ENCODE measurements at regions of chr1 and their contacts with region 1.

Region 1: DNA sequence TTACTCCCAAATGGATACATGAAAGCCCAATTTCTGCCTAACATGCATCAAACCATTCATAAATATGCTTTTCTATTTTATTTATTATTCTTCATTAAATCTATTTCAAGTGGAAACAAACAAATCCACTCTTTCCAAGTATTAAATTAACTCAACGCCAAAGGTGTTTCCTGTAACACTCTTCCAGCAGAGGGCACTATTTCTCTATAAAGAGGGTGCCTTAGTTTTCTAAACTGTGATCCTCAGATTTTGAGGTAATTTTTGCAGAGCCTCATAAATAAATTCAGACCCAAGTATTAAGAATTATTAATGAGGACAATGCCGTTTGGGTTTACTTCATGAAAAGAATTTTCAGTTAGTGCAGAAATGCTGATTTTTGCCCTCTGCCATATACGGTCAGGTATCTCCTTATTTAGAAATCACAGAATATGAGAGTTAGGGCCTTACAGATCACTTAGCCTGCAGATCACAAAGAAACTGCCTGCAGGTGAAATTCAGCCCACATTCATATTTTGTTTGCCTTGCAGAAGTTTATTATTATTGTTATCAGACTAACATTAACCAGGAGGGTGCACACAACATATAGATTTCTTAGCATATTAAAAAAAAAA is 40.1 kb upstream of the MYSM1 start:
- DNase-seq: peak; percentile 52 to 79 (median 72)
- H3K4me3 ChIP-seq: no peak overlapping the region
- H3K27ac ChIP-seq: no peak overlapping the region
- H3K4me1 ChIP-seq: peaks cover 4 to 21% (median 12%) of the 10 kb centered on the region in 4 experiments
- H3K27me3 ChIP-seq: no peaks in the 10 kb centered on the region

Region 2: DNA sequence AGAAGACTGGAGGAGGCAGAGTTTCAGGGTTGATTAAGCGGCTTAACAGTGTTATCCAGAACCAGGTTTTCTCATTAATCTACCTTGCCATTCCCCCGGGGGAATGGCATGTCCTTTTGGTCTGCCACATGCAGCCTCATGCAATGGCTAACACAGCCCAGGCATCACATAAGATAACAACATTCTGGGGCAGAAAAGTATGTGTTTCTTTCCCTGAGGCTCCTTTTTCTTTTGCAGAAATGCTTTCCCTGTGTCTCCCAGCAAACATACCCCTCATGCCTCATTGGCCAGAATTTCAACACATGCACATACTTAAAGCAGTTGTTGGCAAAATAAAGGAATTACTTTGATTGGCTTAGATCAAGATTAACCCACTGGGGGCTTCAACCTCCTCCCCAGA is 292.1 kb before region 1 on chr1:
- CTCF ChIA-PET with region 1: no interaction called
- POLR2A ChIA-PET with region 1: no interaction called
- DNase-seq: no peak
- H3K4me3 ChIP-seq: no peak overlapping the region
- H3K27ac ChIP-seq: no peak overlapping the region
- H3K4me1 ChIP-seq: no peaks in the 10 kb centered on the region
- H3K27me3 ChIP-seq: no peaks in the 10 kb centered on the region

Region 3: GRCh38 chr1:58688931-58689566 is 50.9 kb before region 1 on chr1:
- CTCF ChIA-PET with region 1: no interaction called
- POLR2A ChIA-PET with region 1: no interaction called
- DNase-seq: no peak
- H3K4me3 ChIP-seq: no peak overlapping the region
- H3K27ac ChIP-seq: no peak overlapping the region
- H3K4me1 ChIP-seq: no peaks in the 10 kb centered on the region
- H3K27me3 ChIP-seq: no peaks in the 10 kb centered on the region

Region 4: DNA sequence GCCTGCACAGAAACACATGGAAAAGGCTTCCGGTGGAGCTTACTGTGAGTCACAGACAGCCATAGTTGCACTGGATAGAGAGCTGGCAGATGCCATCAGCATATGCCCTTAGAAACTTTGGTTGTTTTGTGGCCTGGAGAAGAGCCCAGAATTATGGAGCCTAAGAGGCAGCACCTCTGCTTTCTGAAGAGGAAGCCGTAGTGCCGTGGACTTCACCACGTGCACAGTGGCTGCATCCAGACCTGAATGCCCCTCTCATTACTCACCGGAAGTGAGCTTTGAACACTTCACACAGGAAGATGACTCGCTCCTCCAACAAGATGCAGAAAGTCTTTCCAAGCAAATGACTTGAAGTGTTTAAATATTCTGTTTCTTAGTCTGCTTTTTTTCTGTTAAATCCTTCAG is 15.5 kb after region 1 on chr1:
- CTCF ChIA-PET with region 1: interaction called, 38 read pairs
- POLR2A ChIA-PET with region 1: no interaction called
- DNase-seq: peak; percentile 88 to 98 (median 95)
- H3K4me3 ChIP-seq: peak overlapping the region in 1 of 7 experiments; percentile 30
- H3K27ac ChIP-seq: peak overlapping the region in 1 of 2 experiments; percentile 50
- H3K4me1 ChIP-seq: peaks cover 16 to 51% (median 32%) of the 10 kb centered on the region in 4 experiments
- H3K27me3 ChIP-seq: no peaks in the 10 kb centered on the region

Region 5: GRCh38 chr1:58768971-58769808 is 29.2 kb after region 1 on chr1:
- CTCF ChIA-PET with region 1: interaction called, 36 read pairs
- POLR2A ChIA-PET with region 1: no interaction called
- DNase-seq: peak in 1 of 3 donors; percentile 38
- H3K4me3 ChIP-seq: no peak overlapping the region
- H3K27ac ChIP-seq: no peak overlapping the region
- H3K4me1 ChIP-seq: peaks cover 9 to 25% (median 15%) of the 10 kb centered on the region in 4 experiments
- H3K27me3 ChIP-seq: no peaks in the 10 kb centered on the region

Region 6: DNA sequence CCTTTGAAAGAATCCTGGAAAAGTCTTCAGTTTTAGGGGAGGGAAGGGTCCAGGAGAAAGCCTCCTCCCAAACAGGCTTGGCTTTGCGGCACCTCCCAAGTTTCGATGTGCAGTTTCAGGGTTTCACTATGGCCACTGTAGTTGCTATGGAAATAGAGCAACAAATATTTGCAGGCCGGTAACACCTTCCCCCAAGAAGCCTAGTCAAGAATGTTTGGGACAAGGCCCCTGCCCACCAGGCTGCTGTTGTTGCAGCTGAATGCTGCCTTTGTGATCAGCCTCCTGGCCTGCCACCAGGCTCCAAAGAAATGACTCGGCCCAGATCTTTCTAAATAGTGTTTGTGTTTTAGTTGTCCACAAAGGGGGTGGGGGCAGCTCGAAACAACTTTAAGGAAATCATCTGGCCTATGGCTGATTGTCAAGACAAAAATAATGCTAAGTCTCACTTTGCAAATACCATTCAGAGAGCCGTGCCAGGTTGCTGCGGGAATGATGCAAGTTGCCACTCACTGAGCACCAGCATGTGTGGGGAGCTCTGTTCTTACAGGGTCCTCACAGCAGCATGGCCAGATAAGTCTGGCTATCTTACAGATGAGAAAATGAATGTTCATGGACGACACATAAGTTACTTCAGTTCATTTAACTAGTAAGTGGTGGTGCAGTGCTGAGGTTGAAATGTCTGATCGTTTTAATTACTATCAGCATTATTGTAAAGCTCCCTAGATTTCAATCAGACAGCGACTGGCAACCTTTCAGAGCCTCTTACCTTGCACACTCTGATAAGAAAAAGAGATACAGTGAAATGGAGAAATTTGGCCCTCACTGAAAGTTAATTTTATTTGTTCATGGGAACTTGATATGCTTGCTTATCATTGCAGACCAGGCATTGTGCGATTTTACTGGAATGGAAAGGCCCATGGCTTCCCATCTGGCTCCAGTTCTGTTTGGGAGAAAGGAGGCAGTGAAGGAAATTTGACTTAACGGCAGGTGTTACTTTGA is 135.1 kb after region 1 on chr1:
- CTCF ChIA-PET with region 1: no interaction called
- POLR2A ChIA-PET with region 1: no interaction called
- DNase-seq: no peak
- H3K4me3 ChIP-seq: no peak overlapping the region
- H3K27ac ChIP-seq: no peak overlapping the region
- H3K4me1 ChIP-seq: peaks cover 0 to 4% (median 0%) of the 10 kb centered on the region in 4 experiments
- H3K27me3 ChIP-seq: no peaks in the 10 kb centered on the region

Region 7: DNA sequence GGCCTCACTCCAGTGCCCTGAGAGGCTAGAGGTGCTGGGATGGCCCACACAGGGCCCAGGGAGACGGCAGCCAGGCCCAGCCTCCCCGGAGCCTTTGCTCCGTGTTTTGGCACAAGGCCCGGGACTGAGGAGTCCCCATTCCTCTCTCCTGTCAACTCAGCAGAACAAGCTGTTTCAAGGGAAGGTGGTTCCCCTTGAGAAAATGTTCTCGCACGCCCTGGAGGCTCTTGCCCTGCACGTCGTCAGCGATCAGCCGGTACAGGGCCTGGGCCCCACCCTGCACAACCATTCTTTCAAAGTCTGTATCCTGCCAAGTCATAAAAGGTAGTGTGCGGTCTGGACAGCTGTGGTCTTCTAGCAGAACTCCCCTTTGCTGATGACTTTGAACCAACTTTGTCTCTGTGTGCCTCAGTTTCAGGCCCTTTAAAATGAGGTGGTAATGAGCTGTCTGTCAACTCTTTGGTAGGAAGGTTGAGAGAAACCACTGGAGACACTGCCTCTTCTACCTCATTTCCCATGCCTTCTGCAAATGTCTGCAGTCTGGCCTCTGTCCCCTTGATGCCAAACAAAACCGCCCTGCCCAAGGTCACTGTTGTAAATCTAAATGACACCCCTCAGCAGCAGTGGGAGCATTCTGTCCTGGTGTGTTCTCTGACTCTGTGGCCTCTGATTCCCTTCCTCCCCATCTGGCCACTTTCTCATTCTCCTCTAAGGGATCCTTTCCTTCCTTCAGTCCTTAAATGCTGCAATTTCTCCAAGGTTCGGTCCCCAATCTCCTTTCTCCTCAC is 182.5 kb after region 1 on chr1:
- CTCF ChIA-PET with region 1: no interaction called
- POLR2A ChIA-PET with region 1: no interaction called
- DNase-seq: peak in 2 of 3 donors; percentile 83 to 89
- H3K4me3 ChIP-seq: no peak overlapping the region
- H3K27ac ChIP-seq: no peak overlapping the region
- H3K4me1 ChIP-seq: peaks cover 4 to 10% (median 8%) of the 10 kb centered on the region in 4 experiments
- H3K27me3 ChIP-seq: peaks cover 0 to 3% (median 0%) of the 10 kb centered on the region in 5 experiments

Region 8: DNA sequence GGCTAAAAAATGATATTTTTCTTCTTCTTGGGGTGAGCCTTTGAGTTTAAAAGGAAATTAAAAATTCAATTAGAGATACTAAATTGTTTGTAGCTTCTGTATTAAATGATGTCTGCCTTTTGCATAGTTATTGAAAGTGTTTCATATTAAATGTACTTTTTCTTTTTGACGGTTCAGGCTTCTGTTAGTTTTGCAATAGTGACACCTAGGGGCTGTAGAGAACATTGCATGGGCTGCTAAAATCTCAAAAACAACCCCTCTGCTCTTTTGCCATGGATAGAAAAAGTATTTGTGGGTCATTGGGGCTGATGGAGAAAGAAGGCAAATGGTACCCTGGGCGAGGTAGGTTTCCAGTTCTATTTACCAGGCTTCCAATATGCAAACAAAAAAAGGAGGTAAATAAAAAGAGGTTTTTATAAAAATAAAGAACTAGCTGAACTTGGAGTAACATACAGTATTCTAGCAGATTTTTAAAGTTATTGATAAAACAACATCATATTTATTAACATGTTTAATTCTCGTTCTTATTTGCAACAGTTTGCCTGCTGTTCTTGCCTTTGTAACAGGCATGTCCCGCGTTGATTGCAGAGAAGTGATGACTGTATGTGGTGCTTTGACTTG is 959.4 kb after region 1 on chr1:
- CTCF ChIA-PET with region 1: interaction called, 10 read pairs
- POLR2A ChIA-PET with region 1: no interaction called
- DNase-seq: peak; percentile 55 to 76 (median 64)
- H3K4me3 ChIP-seq: no peak overlapping the region
- H3K27ac ChIP-seq: no peak overlapping the region
- H3K4me1 ChIP-seq: peaks cover 20 to 36% (median 24%) of the 10 kb centered on the region in 4 experiments
- H3K27me3 ChIP-seq: no peaks in the 10 kb centered on the region

Region 9: GRCh38 chr1:59759156-59759925 is 1019.4 kb after region 1 on chr1:
- CTCF ChIA-PET with region 1: interaction called, 14 read pairs
- POLR2A ChIA-PET with region 1: no interaction called
- DNase-seq: peak; percentile 72 to 83 (median 79)
- H3K4me3 ChIP-seq: peak overlapping the region in 5 of 7 experiments; percentile 5 to 67 (median 41)
- H3K27ac ChIP-seq: no peak overlapping the region
- H3K4me1 ChIP-seq: peaks cover 0 to 7% (median 3%) of the 10 kb centered on the region in 4 experiments
- H3K27me3 ChIP-seq: no peaks in the 10 kb centered on the region

Measured in common myeloid progenitor, CD34-positive (primary cell).